ENCODE measurements at regions of chr4 and their contacts with region 1.

Region 1: DNA sequence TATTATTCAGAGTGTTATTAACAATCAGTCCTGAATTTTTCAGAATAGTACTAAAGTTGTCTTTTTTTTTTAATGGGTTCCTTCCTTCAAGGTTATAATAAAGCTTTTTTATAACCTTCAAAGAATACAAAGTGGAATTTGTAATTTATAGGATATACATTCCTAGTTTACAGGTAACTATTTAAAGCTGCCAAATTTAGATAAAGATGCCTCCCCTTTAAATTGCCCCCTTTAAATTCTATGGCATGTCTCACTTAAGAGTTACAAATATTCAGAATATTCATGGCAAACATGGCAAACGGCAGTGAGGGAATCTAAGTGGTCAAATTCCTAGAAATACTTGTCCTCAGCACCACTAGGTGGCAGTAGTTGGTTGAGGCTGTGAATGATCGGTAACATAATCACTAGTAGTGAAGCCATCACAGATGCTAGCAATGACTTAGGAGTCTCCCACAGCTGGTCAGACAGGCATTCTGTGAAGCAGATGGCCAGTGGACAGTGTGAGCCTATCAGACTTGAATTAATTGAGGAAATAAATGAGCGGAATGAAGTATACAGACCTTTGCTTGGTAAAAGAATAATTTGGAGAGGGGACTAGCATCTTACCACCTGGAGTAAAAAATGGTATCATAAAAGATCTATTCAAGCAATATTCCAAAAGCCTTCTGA is 86.4 kb downstream of the CBR4 start:
- DNase-seq: peak; percentile 60
- H3K4me3 ChIP-seq: no peak overlapping the region
- H3K27ac ChIP-seq: peak overlapping the region; percentile 9 to 94; a peak in 3 of 4 replicates
- H3K4me1 ChIP-seq: peaks cover 0 to 35% of the 10 kb centered on the region in 2 experiments; a peak in 2 of 4 replicates
- H3K27me3 ChIP-seq: no peaks in the 10 kb centered on the region
- CTCF ChIP-seq: peak; percentile 85
- EP300 ChIP-seq: peak in 1 of 2 experiments; percentile 78; a peak in 2 of 4 replicates
- RAD21 ChIP-seq: peak; percentile 84

Region 2: GRCh38 chr4:168585168-168586091 is 338.2 kb before region 1 on chr4:
- CTCF ChIA-PET with region 1: interaction called, 82 read pairs
- POLR2A ChIA-PET with region 1: no interaction called
- DNase-seq: peak; percentile 60
- H3K4me3 ChIP-seq: no peak overlapping the region
- H3K27ac ChIP-seq: peak overlapping the region in 1 of 2 experiments; percentile 77; a peak in 3 of 4 replicates
- H3K4me1 ChIP-seq: peaks cover 5 to 47% of the 10 kb centered on the region in 2 experiments
- H3K27me3 ChIP-seq: no peaks in the 10 kb centered on the region
- CTCF ChIP-seq: peak; percentile 83
- EP300 ChIP-seq: no peak
- RAD21 ChIP-seq: peak; percentile 90

Region 3: DNA sequence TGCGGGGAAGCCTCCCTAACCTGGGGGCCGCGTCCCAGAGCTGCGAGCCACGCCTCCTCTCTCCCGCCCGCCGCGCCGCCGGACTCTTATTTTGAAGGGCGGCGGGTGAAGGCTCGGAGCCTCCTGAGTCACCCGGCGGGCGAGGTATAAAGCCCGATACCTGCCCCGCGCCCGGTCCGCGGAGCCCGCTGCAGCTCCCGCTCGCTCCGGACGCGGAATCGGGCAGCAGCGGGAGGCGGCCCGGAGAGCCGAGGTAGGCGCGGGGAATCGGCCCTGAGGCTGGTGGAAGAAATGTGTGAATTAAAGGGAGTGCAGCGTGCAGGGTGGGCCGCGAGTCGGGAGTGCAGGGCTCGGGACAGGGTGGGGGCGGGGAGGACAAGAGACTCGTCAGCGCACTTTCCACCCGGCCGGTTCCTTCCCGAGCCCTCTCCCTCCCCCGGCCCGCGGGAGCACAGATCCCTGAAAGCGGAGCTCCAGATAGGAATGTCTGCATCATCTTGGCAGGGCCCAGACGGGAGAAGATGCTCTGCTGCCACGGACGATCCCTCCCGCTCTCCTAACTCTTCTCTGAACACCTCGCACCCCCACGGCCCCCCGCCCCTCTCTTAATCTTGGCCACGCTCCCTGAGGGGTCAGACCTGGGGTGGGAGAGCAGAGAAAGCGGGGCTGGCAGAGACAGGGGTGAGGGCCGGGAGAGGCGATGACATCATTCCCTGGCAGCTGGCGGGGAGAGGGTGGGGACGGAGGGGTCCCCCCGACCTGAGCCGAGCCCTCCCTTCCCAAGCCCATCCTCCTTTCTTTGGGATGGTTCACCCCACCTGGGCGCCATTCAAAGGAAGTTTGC is 91.5 kb before region 1 on chr4:
- CTCF ChIA-PET with region 1: interaction called, 61 read pairs
- POLR2A ChIA-PET with region 1: interaction called, 5 read pairs
- DNase-seq: peak; percentile 86
- H3K4me3 ChIP-seq: peak overlapping the region; percentile 82 to 93
- H3K27ac ChIP-seq: peak overlapping the region; percentile 80 to 90
- H3K4me1 ChIP-seq: peaks cover 10 to 13% of the 10 kb centered on the region in 2 experiments; a peak in 3 of 4 replicates
- H3K27me3 ChIP-seq: no peaks in the 10 kb centered on the region
- CTCF ChIP-seq: no peak
- EP300 ChIP-seq: no peak; a peak in 1 of 4 replicates
- RAD21 ChIP-seq: no peak

Region 4: DNA sequence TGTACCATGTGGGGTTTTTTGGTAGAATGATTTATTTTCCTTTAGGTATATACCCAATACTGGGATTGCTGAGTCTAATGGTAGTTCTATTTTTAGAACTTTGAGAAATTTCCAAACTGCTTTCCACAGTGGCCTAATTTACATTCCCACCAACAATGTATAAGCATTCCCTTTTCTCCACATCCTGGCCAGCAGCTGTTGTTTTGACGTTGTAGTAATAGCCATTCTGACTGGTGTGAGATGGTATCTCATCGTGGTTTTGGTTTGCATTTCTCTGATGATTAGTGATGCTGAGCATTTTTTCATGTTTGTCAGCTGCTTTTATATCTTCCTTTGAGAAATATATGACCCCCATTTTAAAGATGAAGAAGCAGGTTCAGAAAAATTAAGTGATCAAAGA is 67.3 kb before region 1 on chr4:
- CTCF ChIA-PET with region 1: no interaction called
- POLR2A ChIA-PET with region 1: no interaction called
- DNase-seq: no peak
- H3K4me3 ChIP-seq: no peak overlapping the region
- H3K27ac ChIP-seq: peak overlapping the region in 1 of 2 experiments; percentile 85; a peak in 3 of 4 replicates
- H3K4me1 ChIP-seq: peaks cover 14 to 26% of the 10 kb centered on the region in 2 experiments; a peak in 2 of 4 replicates
- H3K27me3 ChIP-seq: no peaks in the 10 kb centered on the region
- CTCF ChIP-seq: no peak
- EP300 ChIP-seq: peak in 1 of 2 experiments; percentile 67; a peak in 1 of 4 replicates
- RAD21 ChIP-seq: no peak

Region 5: GRCh38 chr4:169010125-169011023 is 86.7 kb after region 1 on chr4 and contains the start of gene CBR4:
- CTCF ChIA-PET with region 1: interaction called, 103 read pairs
- POLR2A ChIA-PET with region 1: interaction called, 9 read pairs
- DNase-seq: peak; percentile 86
- H3K4me3 ChIP-seq: peak within 1 kb of the TSS; percentile 74 to 86
- H3K27ac ChIP-seq: peak within 1 kb of the TSS; percentile 91 to 96
- H3K4me1 ChIP-seq: peaks cover 0 to 19% of the 10 kb centered on the region in 2 experiments; a peak in 2 of 4 replicates
- H3K27me3 ChIP-seq: no peaks in the 10 kb centered on the region
- CTCF ChIP-seq: peak; percentile 20
- EP300 ChIP-seq: no peak
- RAD21 ChIP-seq: peak; percentile 32; the same call in 1 of the 2 replicates
- polyA plus RNA-seq, gene CBR4: 2.8 and 4.1 TPM in 2 replicates

Region 6: GRCh38 chr4:169492438-169493163 is 568.9 kb after region 1 on chr4:
- CTCF ChIA-PET with region 1: interaction called, 13 read pairs
- POLR2A ChIA-PET with region 1: no interaction called
- DNase-seq: peak; percentile 33
- H3K4me3 ChIP-seq: no peak overlapping the region
- H3K27ac ChIP-seq: no peak overlapping the region
- H3K4me1 ChIP-seq: no peaks in the 10 kb centered on the region
- H3K27me3 ChIP-seq: no peaks in the 10 kb centered on the region
- CTCF ChIP-seq: peak; percentile 70
- EP300 ChIP-seq: no peak
- RAD21 ChIP-seq: peak; percentile 73

Region 7: GRCh38 chr4:170138580-170139194 is 1215.0 kb after region 1 on chr4:
- CTCF ChIA-PET with region 1: no interaction called
- POLR2A ChIA-PET with region 1: no interaction called
- DNase-seq: peak; percentile 68
- H3K4me3 ChIP-seq: peak overlapping the region in 1 of 2 experiments; percentile 10; a peak in 1 of 4 replicates
- H3K27ac ChIP-seq: no peak overlapping the region
- H3K4me1 ChIP-seq: no peaks in the 10 kb centered on the region
- H3K27me3 ChIP-seq: no peaks in the 10 kb centered on the region
- CTCF ChIP-seq: peak; percentile 85
- EP300 ChIP-seq: no peak
- RAD21 ChIP-seq: peak; percentile 83